Stomach (tissue), 19 donors: ENCODE measurements at regions of chr1 and their contacts with region 1.

Region 1: GRCh38 chr1:20981915-20982314 is 194.8 kb downstream of the EIF4G3 start:
- DNase-seq: peak in 1 of 2 donors; percentile 52
- H3K4me3 ChIP-seq: no peak overlapping the region
- H3K27ac ChIP-seq: no peak overlapping the region
- H3K4me1 ChIP-seq: peaks cover 0 to 5% (median 0%) of the 10 kb centered on the region in 4 donors
- H3K27me3 ChIP-seq: no peaks in the 10 kb centered on the region
- CTCF ChIP-seq: peak in 3 of 7 experiments; percentile 9 to 30 (median 12)
- EP300 ChIP-seq: no peak
- POLR2A ChIP-seq: no peak

Region 2: DNA sequence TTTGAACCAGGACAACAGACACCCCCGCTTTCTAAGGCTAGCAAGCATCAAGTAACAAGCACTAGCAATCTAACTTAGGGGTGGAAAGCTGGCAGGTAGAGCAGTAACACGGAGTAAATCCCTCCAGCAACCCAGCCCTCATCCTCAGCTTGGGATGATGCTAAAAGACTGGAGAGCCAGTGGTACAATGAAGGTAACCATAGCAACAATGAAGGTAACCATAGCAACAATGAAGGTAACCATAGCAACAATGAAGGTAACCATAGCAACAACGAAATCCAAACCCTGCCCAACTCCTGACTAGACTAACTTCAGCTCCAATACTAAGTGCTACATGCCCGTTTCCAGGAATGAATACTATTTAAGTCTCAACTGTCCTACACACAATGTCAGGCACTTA is 217.0 kb after region 1 on chr1:
- intact Hi-C with region 1: loop called (anchors 5 kb)
- DNase-seq: no peak
- H3K4me3 ChIP-seq: no peak overlapping the region
- H3K27ac ChIP-seq: no peak overlapping the region
- H3K4me1 ChIP-seq: peaks cover 0 to 10% (median 3%) of the 10 kb centered on the region in 4 donors
- H3K27me3 ChIP-seq: peaks cover 0 to 10% (median 0%) of the 10 kb centered on the region in 3 donors
- CTCF ChIP-seq: no peak
- EP300 ChIP-seq: no peak
- POLR2A ChIP-seq: no peak

Region 3: DNA sequence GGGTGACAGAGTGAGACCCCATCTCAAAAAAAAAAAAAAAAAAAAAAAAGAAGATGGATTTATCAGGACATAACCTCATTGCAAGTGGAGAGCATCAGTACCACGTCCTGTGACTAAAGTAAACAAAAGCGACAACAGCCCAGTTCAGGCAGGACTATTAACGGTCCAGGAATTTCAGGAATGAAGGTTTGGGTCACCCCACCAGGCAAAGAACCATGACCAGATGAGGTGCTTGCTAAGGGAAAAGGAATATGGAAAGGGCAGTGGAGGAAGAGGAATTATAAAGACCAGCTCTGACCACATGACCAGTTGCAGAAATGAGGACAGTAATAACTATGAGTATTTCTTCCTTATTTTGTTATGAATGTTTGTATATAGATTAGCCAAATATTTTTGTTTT is 230.2 kb after region 1 on chr1:
- intact Hi-C with region 1: no loop called
- DNase-seq: no peak
- H3K4me3 ChIP-seq: no peak overlapping the region
- H3K27ac ChIP-seq: no peak overlapping the region
- H3K4me1 ChIP-seq: peaks cover 0 to 4% (median 0%) of the 10 kb centered on the region in 4 donors
- H3K27me3 ChIP-seq: no peaks in the 10 kb centered on the region
- CTCF ChIP-seq: no peak
- EP300 ChIP-seq: no peak
- POLR2A ChIP-seq: no peak